Thyroid gland (tissue), 4 donors: ENCODE measurements at regions of chr4 and their contacts with region 1.

Region 1: DNA sequence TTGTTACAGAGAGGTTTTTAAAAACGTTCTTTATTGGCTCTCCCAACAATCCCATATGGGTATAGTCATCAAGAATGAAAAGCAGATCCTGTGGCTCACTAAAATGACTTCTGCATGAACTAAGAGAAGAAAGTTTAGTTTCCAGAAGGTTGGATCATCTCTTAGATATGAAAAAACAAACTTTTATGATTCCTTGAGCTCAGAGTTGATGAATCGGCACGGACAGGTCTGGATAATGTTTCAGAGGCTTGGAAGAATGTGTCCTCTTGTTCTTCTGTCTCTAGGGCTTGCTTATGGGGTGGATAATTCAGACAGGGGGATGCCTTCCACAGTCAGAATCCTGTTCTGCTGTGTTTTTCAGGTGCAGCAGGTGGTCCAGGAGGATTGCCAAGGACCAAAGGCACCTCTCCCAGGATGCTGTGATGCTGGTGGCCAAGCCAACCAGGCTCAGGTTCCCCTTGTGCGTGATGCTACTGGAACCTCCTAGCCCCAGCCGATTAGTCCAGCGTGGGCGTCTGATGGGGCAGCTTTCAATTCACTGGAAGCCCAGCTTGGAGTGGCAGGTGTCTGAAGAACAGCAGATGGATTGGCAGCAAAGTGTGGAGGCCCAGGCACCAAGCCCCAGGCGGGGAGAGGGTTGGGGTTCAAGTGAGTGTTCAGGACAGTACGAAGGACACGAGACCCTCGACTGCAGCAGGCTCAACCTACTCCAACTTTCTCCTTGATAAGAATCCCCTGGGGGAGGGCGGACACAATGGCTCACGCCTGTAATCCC is 30.3 kb downstream of the CCKAR start:
- DNase-seq: no peak
- H3K4me3 ChIP-seq: no peak overlapping the region
- H3K27ac ChIP-seq: no peak overlapping the region
- H3K4me1 ChIP-seq: no peaks in the 10 kb centered on the region
- H3K27me3 ChIP-seq: no peaks in the 10 kb centered on the region
- CTCF ChIP-seq: no peak
- POLR2A ChIP-seq: no peak

Region 2: DNA sequence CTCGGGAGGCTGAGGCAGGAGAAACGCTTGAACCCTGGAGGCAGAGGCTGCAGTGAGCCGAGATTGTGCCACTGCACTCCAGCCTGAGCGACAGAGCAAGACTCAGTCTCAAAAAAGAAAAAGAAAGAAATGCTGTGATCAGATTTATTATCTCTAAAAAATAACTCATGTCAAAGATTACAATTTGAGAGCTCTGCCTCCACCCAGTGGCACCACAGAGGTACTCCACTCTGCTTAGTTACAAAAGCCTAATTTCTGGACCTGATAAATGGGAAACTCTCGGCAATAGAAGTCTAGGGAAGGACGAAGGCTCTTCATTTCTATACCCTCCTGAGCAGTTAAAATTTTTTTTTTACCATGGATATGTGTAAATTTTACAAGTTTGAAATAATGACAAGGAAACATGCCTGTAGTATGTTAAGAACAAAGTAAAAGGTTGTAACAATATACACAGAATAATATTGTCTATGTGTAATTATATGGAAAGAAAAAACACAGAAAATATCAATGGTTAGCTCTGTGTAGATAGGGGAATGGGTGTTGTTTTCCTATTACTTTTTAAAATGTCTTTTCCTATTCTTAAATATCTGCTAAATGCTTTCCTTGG is 550.5 kb after region 1 on chr4:
- intact Hi-C with region 1: loop called (anchors 10 kb)
- DNase-seq: peak; percentile 47 to 71
- H3K4me3 ChIP-seq: no peak overlapping the region
- H3K27ac ChIP-seq: no peak overlapping the region
- H3K4me1 ChIP-seq: peaks cover 0 to 24% of the 10 kb centered on the region in 2 donors
- H3K27me3 ChIP-seq: no peaks in the 10 kb centered on the region
- CTCF ChIP-seq: peak; percentile 82 to 91 (median 90)
- POLR2A ChIP-seq: no peak